Activated CD4-positive, alpha-beta T cell treated with anti-CD3 and anti-CD28 coated beads, Interleukin-2, amount 10 ng/mL, durations not matched to agents 24 days and 14 days (primary cell): ENCODE measurements at regions of chr4 and their contacts with region 1.

Region 1: GRCh38 chr4:186037692-186038658 is 31.0 kb upstream of the TLR3 start:
- DNase-seq: peak; percentile 78
- H3K4me3 Mint-ChIP-seq: no peak overlapping the region
- H3K27ac Mint-ChIP-seq: no peak overlapping the region
- H3K4me1 Mint-ChIP-seq: no peaks in the 10 kb centered on the region
- H3K27me3 Mint-ChIP-seq: peaks cover 9% of the 10 kb centered on the region

Region 2: GRCh38 chr4:185640811-185641675 is 396.9 kb before region 1 on chr4:
- intact Hi-C with region 1: loop called (anchors 1 kb)
- DNase-seq: no peak
- H3K4me3 Mint-ChIP-seq: no peak overlapping the region
- H3K27ac Mint-ChIP-seq: no peak overlapping the region
- H3K4me1 Mint-ChIP-seq: no peaks in the 10 kb centered on the region
- H3K27me3 Mint-ChIP-seq: peaks cover 40% of the 10 kb centered on the region

Region 3: DNA sequence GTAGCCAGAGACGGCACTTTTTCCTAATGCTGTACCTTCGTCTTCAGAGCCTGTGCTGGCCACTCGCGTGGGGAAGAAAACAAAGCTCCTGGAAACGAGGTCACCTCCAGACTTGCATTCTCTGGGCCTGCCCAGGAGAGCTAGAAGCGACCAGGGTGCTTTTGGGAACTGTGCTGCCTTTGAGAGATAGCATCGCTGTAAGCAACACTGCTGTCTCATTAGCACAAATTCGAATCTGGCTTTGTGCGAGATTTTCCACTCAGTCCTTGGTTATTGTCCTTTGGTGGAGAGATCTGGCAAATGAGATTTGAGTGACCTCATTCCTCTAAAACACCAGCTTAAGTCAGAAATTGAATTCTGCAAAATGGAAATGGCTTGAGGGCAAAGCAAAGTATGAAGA is 35.1 kb before region 1 on chr4:
- intact Hi-C with region 1: no loop called
- DNase-seq: no peak
- H3K4me3 Mint-ChIP-seq: no peak overlapping the region
- H3K27ac Mint-ChIP-seq: no peak overlapping the region
- H3K4me1 Mint-ChIP-seq: no peaks in the 10 kb centered on the region
- H3K27me3 Mint-ChIP-seq: peaks cover 4% of the 10 kb centered on the region